Left cardiac atrium (tissue), 4 donors: ENCODE measurements at regions of chrX and their contacts with region 1.

Region 1: GRCh38 chrX:129606918-129607317 is 47.8 kb downstream of the APLN start:
- DNase-seq: peak; percentile 42
- ATAC-seq: peak; percentile 58

Region 2: DNA sequence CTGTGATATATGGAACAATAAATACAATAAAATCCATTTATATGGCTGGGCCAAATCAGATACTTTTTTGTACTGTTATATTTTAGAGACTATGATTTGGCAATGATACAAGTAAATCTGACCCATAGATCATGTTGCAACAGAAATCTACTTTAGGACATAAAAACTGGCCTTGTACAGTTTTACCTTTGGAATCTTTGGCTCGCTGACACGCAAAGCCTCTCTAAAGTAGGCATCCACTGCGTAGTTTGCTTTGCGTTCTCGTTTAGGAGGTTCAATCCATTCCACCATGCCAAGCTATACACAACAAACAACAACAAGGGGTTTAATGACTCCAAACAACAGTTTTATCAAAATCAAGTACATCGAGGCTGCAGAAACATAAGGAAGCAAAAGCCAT is 126.0 kb before region 1 on chrX:
- intact Hi-C with region 1: no loop called
- DNase-seq: no peak
- ATAC-seq: no peak

Region 3: GRCh38 chrX:129726307-129727111 is 119.6 kb after region 1 on chrX:
- intact Hi-C with region 1: loop called in 1 of 2 experiments (anchors 10 kb)
- DNase-seq: peak; percentile 60
- ATAC-seq: peak; percentile 81 to 88

Region 4: DNA sequence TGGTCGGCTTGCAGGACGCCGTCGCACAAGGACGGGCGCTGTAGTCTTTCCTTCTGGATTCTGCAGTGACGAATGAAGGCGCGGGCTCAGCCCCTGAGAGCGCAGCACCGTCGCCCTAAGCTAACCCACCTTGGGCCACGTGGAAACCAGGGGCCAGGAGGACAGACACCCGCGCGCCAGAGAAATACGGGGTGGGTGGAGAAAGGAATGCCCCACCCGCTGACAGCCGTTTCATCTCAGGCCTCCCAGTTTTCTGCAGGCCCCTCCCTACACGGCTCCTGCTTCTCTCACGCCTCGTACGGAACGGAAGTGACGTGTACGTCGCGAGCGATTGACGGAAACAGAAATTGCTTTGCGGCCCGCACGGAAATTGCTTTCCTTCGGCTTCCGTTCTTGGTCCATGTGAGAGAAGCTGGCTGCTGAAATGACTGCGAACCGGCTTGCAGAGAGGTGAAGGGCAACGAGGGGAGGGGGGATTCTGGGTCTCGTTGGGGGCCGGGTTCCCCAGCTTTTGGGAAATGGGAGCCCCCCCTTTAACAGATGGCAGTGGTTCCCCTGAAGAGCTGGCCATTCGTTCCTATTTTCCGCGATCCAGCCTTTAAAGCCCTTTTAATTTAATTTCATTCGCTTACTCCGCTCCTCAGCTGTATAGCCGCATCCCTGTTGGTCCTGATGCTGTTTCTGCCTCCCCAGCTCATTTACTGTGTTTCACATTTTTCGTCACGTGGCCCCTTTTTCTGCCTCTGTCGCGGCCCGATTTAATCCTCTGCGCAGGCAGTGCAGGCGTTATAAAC is 299.1 kb after region 1 on chrX and contains the start of gene UTP14A:
- intact Hi-C with region 1: loop called in 1 of 2 experiments (anchors 10 kb)
- DNase-seq: peak; percentile 92
- ATAC-seq: peak; percentile 98 to 100
- total RNA-seq, gene UTP14A: 7.7 to 13.7 TPM

Region 5: GRCh38 chrX:130060122-130061069 is 453.5 kb after region 1 on chrX:
- intact Hi-C with region 1: loop called in 1 of 2 experiments (anchors 5 kb)
- DNase-seq: peak; percentile 79
- ATAC-seq: peak; percentile 91 to 93

Region 6: GRCh38 chrX:130196466-130196865 is 589.5 kb after region 1 on chrX:
- intact Hi-C with region 1: loop called in 1 of 2 experiments (anchors 10 kb)
- DNase-seq: no peak
- ATAC-seq: no peak